Motor neuron (in vitro differentiated cells): ENCODE measurements at regions of chr2 and their contacts with region 1.

Region 1: GRCh38 chr2:99032786-99033185 is 96.8 kb upstream of the CRACDL start:
- ATAC-seq: no peak
- H3K4me3 ChIP-seq: no peak overlapping the region
- H3K27ac ChIP-seq: no peak overlapping the region
- H3K4me1 ChIP-seq: no peaks in the 10 kb centered on the region

Region 2: GRCh38 chr2:98909317-98910211 is 123.2 kb before region 1 on chr2:
- in situ Hi-C with region 1: loop called in 1 of 9 experiments (anchors 25 kb)
- ATAC-seq: peak; percentile 58 to 90 (median 74)
- H3K4me3 ChIP-seq: no peak overlapping the region
- H3K27ac ChIP-seq: no peak overlapping the region
- H3K4me1 ChIP-seq: peaks cover 9 to 11% of the 10 kb centered on the region in 2 donors